ENCODE measurements at regions of chr12 and their contacts with region 1.

Region 1: GRCh38 chr12:56571126-56571525 is 49.5 kb downstream of the RBMS2 start:
- DNase-seq: no peak
- ATAC-seq: no peak
- H3K4me3 ChIP-seq: no peak overlapping the region
- H3K4me3 Mint-ChIP-seq: no peak overlapping the region
- H3K27ac ChIP-seq: no peak overlapping the region
- H3K27ac Mint-ChIP-seq: no peak overlapping the region
- H3K4me1 ChIP-seq: peaks cover 29% of the 10 kb centered on the region
- H3K4me1 Mint-ChIP-seq: peaks cover 27% of the 10 kb centered on the region
- H3K27me3 ChIP-seq: no peaks in the 10 kb centered on the region
- H3K27me3 Mint-ChIP-seq: no peaks in the 10 kb centered on the region
- CTCF ChIP-seq: no peak

Region 2: GRCh38 chr12:56521590-56522371 is 49.3 kb before region 1 on chr12 and contains the start of gene RBMS2:
- CTCF ChIA-PET with region 1: interaction called, 4 read pairs
- POLR2A ChIA-PET with region 1: interaction called, 11 read pairs
- intact Hi-C with region 1: loop called in 1 of 2 experiments (anchors 2 kb)
- DNase-seq: peak in 13 of 14 experiments; percentile 10 to 82 (median 31)
- ATAC-seq: peak; percentile 93
- H3K4me3 ChIP-seq: peak within 1 kb of the TSS; percentile 54
- H3K4me3 Mint-ChIP-seq: peak within 1 kb of the TSS; percentile 98
- H3K27ac ChIP-seq: peak within 1 kb of the TSS in 1 of 2 donors; percentile 14
- H3K27ac Mint-ChIP-seq: peak within 1 kb of the TSS; percentile 71
- H3K4me1 ChIP-seq: peaks cover 20% of the 10 kb centered on the region
- H3K4me1 Mint-ChIP-seq: peaks cover 38% of the 10 kb centered on the region
- H3K27me3 ChIP-seq: no peaks in the 10 kb centered on the region
- H3K27me3 Mint-ChIP-seq: no peaks in the 10 kb centered on the region
- CTCF ChIP-seq: no peak
- total RNA-seq, gene RBMS2: 5.1 to 10.8 TPM

Region 3: DNA sequence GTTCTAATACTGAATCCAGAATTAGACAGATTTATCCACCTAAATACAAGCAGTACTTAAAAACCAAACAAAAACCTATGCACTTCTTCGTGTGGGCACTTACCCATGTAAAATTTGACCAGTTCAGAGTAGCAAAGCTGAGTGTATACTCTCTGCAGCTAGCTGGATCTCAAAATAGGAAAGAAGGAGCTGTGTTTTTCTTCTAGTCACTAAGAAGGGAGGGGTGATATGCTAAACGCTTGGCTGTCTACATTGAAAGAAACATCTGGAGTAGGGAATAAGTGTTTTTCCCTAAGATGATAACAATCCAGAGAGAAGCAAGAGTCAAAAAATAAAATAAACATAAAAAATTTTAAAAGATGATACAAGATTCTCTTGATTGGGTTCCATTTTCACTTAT is 29.5 kb before region 1 on chr12:
- CTCF ChIA-PET with region 1: no interaction called
- POLR2A ChIA-PET with region 1: no interaction called
- intact Hi-C with region 1: no loop called
- DNase-seq: no peak
- ATAC-seq: no peak
- H3K4me3 ChIP-seq: no peak overlapping the region
- H3K4me3 Mint-ChIP-seq: no peak overlapping the region
- H3K27ac ChIP-seq: no peak overlapping the region
- H3K27ac Mint-ChIP-seq: no peak overlapping the region
- H3K4me1 ChIP-seq: no peaks in the 10 kb centered on the region
- H3K4me1 Mint-ChIP-seq: no peaks in the 10 kb centered on the region
- H3K27me3 ChIP-seq: no peaks in the 10 kb centered on the region
- H3K27me3 Mint-ChIP-seq: no peaks in the 10 kb centered on the region
- CTCF ChIP-seq: no peak

Region 4: GRCh38 chr12:56593909-56594621 is 22.9 kb after region 1 on chr12:
- CTCF ChIA-PET with region 1: interaction called, 5 read pairs
- POLR2A ChIA-PET with region 1: no interaction called
- intact Hi-C with region 1: loop called in 1 of 2 experiments (anchors 1 kb)
- DNase-seq: peak; percentile 35 to 75 (median 48)
- ATAC-seq: peak; percentile 85
- H3K4me3 ChIP-seq: no peak overlapping the region
- H3K4me3 Mint-ChIP-seq: no peak overlapping the region
- H3K27ac ChIP-seq: no peak overlapping the region
- H3K27ac Mint-ChIP-seq: peak overlapping the region; percentile 6
- H3K4me1 ChIP-seq: no peaks in the 10 kb centered on the region
- H3K4me1 Mint-ChIP-seq: peaks cover 8% of the 10 kb centered on the region
- H3K27me3 ChIP-seq: no peaks in the 10 kb centered on the region
- H3K27me3 Mint-ChIP-seq: no peaks in the 10 kb centered on the region
- CTCF ChIP-seq: peak; percentile 79

Region 5: GRCh38 chr12:56816491-56816890 is 245.4 kb after region 1 on chr12:
- CTCF ChIA-PET with region 1: no interaction called
- POLR2A ChIA-PET with region 1: no interaction called
- intact Hi-C with region 1: no loop called
- DNase-seq: no peak
- ATAC-seq: no peak
- H3K4me3 ChIP-seq: no peak overlapping the region
- H3K4me3 Mint-ChIP-seq: no peak overlapping the region
- H3K27ac ChIP-seq: no peak overlapping the region
- H3K27ac Mint-ChIP-seq: no peak overlapping the region
- H3K4me1 ChIP-seq: no peaks in the 10 kb centered on the region
- H3K4me1 Mint-ChIP-seq: no peaks in the 10 kb centered on the region
- H3K27me3 ChIP-seq: peaks cover 2 to 5% of the 10 kb centered on the region in 2 experiments
- H3K27me3 Mint-ChIP-seq: peaks cover 17% of the 10 kb centered on the region
- CTCF ChIP-seq: no peak